ENCODE measurements at regions of chr20 and their contacts with region 1.

Region 1: GRCh38 chr20:3767427-3768341 is at the start of gene ADISSP:
- DNase-seq: peak; percentile 89 to 98 (median 95)
- ATAC-seq: peak; percentile 82
- H3K4me3 ChIP-seq: peak within 1 kb of the TSS; percentile 87
- H3K4me3 Mint-ChIP-seq: peak within 1 kb of the TSS; percentile 90
- H3K27ac ChIP-seq: peak within 1 kb of the TSS; percentile 96 to 99
- H3K27ac Mint-ChIP-seq: peak within 1 kb of the TSS; percentile 86
- H3K4me1 ChIP-seq: peaks cover 37% of the 10 kb centered on the region
- H3K4me1 Mint-ChIP-seq: peaks cover 26% of the 10 kb centered on the region
- H3K27me3 ChIP-seq: no peaks in the 10 kb centered on the region
- H3K27me3 Mint-ChIP-seq: no peaks in the 10 kb centered on the region
- CTCF ChIP-seq: no peak
- total RNA-seq, gene ADISSP: 11.2 to 11.6 TPM

Region 2: GRCh38 chr20:3146732-3147341 is 620.8 kb before region 1 on chr20:
- CTCF ChIA-PET with region 1: no interaction called
- POLR2A ChIA-PET with region 1: no interaction called
- intact Hi-C with region 1: no loop called
- DNase-seq: no peak
- ATAC-seq: no peak
- H3K4me3 ChIP-seq: no peak overlapping the region
- H3K4me3 Mint-ChIP-seq: no peak overlapping the region
- H3K27ac ChIP-seq: no peak overlapping the region
- H3K27ac Mint-ChIP-seq: peak overlapping the region; percentile 15
- H3K4me1 ChIP-seq: peaks cover 10% of the 10 kb centered on the region
- H3K4me1 Mint-ChIP-seq: peaks cover 56% of the 10 kb centered on the region
- H3K27me3 ChIP-seq: no peaks in the 10 kb centered on the region
- H3K27me3 Mint-ChIP-seq: no peaks in the 10 kb centered on the region
- CTCF ChIP-seq: no peak

Region 3: DNA sequence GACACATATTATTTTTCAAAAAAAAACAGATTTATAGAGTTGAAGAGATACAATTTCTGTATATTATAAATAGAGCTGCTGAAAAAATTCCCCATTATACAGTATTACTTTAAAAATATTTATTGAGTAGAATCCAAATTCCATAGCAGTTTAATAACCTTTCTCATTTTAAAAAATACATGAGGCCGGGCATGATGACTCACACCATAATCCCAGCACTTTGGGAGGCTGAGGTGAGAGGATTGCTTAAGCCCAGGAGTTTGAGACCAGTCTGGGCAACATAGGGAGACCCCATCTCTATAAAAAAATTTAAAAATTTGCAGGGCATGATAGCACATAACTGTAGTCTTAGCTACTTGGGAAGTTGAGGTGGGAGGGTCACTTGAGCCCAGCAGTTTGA is 283.9 kb before region 1 on chr20:
- CTCF ChIA-PET with region 1: no interaction called
- POLR2A ChIA-PET with region 1: no interaction called
- intact Hi-C with region 1: no loop called
- DNase-seq: no peak
- ATAC-seq: no peak
- H3K4me3 ChIP-seq: no peak overlapping the region
- H3K4me3 Mint-ChIP-seq: no peak overlapping the region
- H3K27ac ChIP-seq: no peak overlapping the region
- H3K27ac Mint-ChIP-seq: no peak overlapping the region
- H3K4me1 ChIP-seq: no peaks in the 10 kb centered on the region
- H3K4me1 Mint-ChIP-seq: peaks cover 28% of the 10 kb centered on the region
- H3K27me3 ChIP-seq: no peaks in the 10 kb centered on the region
- H3K27me3 Mint-ChIP-seq: no peaks in the 10 kb centered on the region
- CTCF ChIP-seq: no peak

Region 4: GRCh38 chr20:3679749-3680700 is 87.7 kb before region 1 on chr20:
- CTCF ChIA-PET with region 1: interaction called, 8 read pairs
- POLR2A ChIA-PET with region 1: interaction called, 4 read pairs
- intact Hi-C with region 1: loop called (anchors 1 to 5 kb)
- DNase-seq: no peak
- ATAC-seq: no peak
- H3K4me3 ChIP-seq: no peak overlapping the region
- H3K4me3 Mint-ChIP-seq: no peak overlapping the region
- H3K27ac ChIP-seq: no peak overlapping the region
- H3K27ac Mint-ChIP-seq: no peak overlapping the region
- H3K4me1 ChIP-seq: peaks cover 10% of the 10 kb centered on the region
- H3K4me1 Mint-ChIP-seq: peaks cover 5% of the 10 kb centered on the region
- H3K27me3 ChIP-seq: peaks cover 36 to 45% of the 10 kb centered on the region in 2 experiments
- H3K27me3 Mint-ChIP-seq: peaks cover 65% of the 10 kb centered on the region
- CTCF ChIP-seq: no peak

Region 5: DNA sequence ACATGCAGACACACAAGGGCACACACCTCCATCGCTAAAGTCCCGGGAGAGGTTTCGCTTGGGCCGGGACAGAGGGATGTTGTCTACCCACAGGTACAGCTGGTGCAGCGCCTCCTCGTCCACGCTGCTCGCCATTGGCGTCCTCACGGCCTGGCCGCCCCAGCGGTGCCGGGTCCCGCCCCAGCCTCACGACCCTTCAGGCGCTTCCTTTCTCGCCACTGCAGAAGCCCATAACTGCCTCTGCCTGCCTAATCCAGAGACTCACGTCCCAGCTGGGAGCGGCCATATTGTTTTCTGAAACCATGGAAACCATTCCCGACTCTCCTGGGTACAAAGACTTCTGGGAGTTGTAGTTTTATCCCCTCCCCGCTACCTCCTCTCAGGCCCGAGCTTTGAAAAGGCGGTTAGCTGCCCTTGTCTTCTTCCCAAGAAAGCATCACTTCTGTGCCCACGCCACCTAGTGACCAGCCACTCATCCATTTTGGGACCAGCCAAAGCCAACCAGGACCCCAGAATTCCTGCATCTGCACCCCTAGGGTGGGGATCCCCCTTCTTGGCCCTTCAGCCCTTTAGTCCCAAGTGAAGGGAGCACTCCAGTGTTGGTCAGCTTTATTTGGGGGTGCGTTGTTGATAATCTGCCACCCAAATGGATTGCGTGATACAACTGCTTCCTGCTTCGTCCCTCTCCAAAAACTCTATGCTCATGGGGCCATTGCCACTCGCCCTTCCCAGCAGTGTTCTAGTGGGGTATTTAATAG is 13.6 kb after region 1 on chr20 and contains the start of gene SPEF1:
- CTCF ChIA-PET with region 1: interaction called, 17 read pairs
- POLR2A ChIA-PET with region 1: interaction called, 36 read pairs
- intact Hi-C with region 1: loop called in 1 of 2 experiments (anchors 2 kb)
- DNase-seq: peak in 5 of 14 experiments; percentile 29 to 84 (median 80)
- ATAC-seq: peak; percentile 40
- H3K4me3 ChIP-seq: peak within 1 kb of the TSS; percentile 47
- H3K4me3 Mint-ChIP-seq: peak within 1 kb of the TSS; percentile 40
- H3K27ac ChIP-seq: no peak within 1 kb of the TSS
- H3K27ac Mint-ChIP-seq: peak within 1 kb of the TSS; percentile 43
- H3K4me1 ChIP-seq: peaks cover 53% of the 10 kb centered on the region
- H3K4me1 Mint-ChIP-seq: peaks cover 48% of the 10 kb centered on the region
- H3K27me3 ChIP-seq: peaks cover 9 to 12% of the 10 kb centered on the region in 2 experiments
- H3K27me3 Mint-ChIP-seq: peaks cover 14% of the 10 kb centered on the region
- CTCF ChIP-seq: no peak
- total RNA-seq, gene SPEF1: not detected

Region 6: GRCh38 chr20:3795511-3796468 is 28.1 kb after region 1 on chr20 and contains the start of gene CDC25B:
- CTCF ChIA-PET with region 1: interaction called, 5 read pairs
- POLR2A ChIA-PET with region 1: interaction called, 21 read pairs
- intact Hi-C with region 1: no loop called
- DNase-seq: peak; percentile 82 to 95 (median 89)
- ATAC-seq: peak; percentile 81
- H3K4me3 ChIP-seq: peak within 1 kb of the TSS; percentile 96
- H3K4me3 Mint-ChIP-seq: peak within 1 kb of the TSS; percentile 100
- H3K27ac ChIP-seq: peak within 1 kb of the TSS; percentile 90 to 95
- H3K27ac Mint-ChIP-seq: peak within 1 kb of the TSS; percentile 95
- H3K4me1 ChIP-seq: peaks cover 50% of the 10 kb centered on the region
- H3K4me1 Mint-ChIP-seq: peaks cover 45% of the 10 kb centered on the region
- H3K27me3 ChIP-seq: no peaks in the 10 kb centered on the region
- H3K27me3 Mint-ChIP-seq: no peaks in the 10 kb centered on the region
- CTCF ChIP-seq: peak; percentile 58
- total RNA-seq, gene CDC25B: 144 TPM

Region 7: DNA sequence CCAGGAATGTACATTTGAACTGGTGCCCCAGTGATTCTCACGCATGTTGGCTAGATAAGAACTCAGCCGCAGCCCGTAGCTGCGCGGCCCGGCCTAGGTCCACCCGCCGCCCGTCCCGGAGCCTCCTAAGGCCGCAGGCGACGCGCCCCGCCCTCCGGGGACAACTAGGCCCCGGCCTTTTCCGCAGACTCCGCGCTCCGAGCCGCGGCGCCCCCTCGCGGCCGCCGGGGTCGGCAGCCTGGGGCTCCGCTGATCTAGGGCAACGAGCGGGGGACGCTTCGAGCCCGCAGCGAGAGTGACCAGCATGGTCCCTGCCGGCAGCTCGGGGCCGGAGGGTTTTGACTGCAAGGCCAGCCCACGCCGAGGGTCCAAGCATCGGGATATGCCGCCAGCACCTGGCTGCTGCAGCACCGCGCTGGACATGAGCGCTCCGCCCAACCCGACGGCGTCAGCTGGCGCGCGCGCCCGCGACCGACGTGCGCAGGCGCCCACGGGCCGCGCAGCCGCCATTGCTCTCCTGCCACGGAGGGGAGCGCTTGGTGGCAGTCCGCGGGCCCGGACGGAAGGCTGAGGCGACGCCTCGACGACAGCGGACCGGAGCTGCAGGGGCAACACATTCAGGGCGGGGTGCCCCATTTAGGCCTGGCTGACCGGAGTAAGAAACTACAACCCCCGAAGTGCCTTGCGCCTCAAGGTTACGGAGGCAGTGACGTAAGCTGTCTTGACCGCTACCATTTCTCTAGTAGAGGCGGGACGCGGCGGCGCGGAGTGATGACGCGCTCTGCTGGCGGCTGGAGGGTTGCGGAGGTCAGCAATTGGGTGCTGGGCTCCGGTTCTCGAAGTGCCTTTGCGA is 52.6 kb after region 1 on chr20 and contains the start of gene AP5S1:
- CTCF ChIA-PET with region 1: interaction called, 10 read pairs
- POLR2A ChIA-PET with region 1: interaction called, 51 read pairs
- intact Hi-C with region 1: no loop called
- DNase-seq: peak; percentile 71 to 95 (median 84)
- ATAC-seq: peak; percentile 84
- H3K4me3 ChIP-seq: peak within 1 kb of the TSS; percentile 92
- H3K4me3 Mint-ChIP-seq: peak within 1 kb of the TSS; percentile 94
- H3K27ac ChIP-seq: peak within 1 kb of the TSS; percentile 93 to 99
- H3K27ac Mint-ChIP-seq: peak within 1 kb of the TSS; percentile 99
- H3K4me1 ChIP-seq: peaks cover 54% of the 10 kb centered on the region
- H3K4me1 Mint-ChIP-seq: peaks cover 48% of the 10 kb centered on the region
- H3K27me3 ChIP-seq: no peaks in the 10 kb centered on the region
- H3K27me3 Mint-ChIP-seq: no peaks in the 10 kb centered on the region
- CTCF ChIP-seq: peak; percentile 89
- total RNA-seq, gene AP5S1: 6.0 TPM

Region 8: DNA sequence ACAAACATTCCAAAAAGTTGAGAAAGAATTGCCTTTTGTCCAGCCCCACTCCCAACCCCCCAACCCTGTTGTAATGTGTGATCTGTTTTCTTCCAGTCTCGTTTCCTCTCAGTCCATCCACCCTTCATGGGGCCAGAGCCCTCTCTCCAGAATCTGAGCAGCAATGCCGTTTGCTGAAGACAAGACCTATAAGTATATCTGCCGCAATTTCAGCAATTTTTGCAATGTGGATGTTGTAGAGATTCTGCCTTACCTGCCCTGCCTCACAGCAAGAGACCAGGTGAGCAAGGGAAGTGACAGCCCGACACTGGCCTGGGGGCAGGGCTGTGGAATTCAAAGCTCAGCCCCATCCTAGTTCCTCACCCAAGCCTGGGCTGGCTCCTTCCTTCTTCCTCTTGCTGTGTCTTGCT is 86.8 kb after region 1 on chr20:
- CTCF ChIA-PET with region 1: interaction called, 8 read pairs
- POLR2A ChIA-PET with region 1: no interaction called
- intact Hi-C with region 1: loop called (anchors 1 to 5 kb)
- DNase-seq: no peak
- ATAC-seq: no peak
- H3K4me3 ChIP-seq: no peak overlapping the region
- H3K4me3 Mint-ChIP-seq: no peak overlapping the region
- H3K27ac ChIP-seq: no peak overlapping the region
- H3K27ac Mint-ChIP-seq: no peak overlapping the region
- H3K4me1 ChIP-seq: peaks cover 9% of the 10 kb centered on the region
- H3K4me1 Mint-ChIP-seq: peaks cover 13% of the 10 kb centered on the region
- H3K27me3 ChIP-seq: no peaks in the 10 kb centered on the region
- H3K27me3 Mint-ChIP-seq: no peaks in the 10 kb centered on the region
- CTCF ChIP-seq: no peak

Region 9: DNA sequence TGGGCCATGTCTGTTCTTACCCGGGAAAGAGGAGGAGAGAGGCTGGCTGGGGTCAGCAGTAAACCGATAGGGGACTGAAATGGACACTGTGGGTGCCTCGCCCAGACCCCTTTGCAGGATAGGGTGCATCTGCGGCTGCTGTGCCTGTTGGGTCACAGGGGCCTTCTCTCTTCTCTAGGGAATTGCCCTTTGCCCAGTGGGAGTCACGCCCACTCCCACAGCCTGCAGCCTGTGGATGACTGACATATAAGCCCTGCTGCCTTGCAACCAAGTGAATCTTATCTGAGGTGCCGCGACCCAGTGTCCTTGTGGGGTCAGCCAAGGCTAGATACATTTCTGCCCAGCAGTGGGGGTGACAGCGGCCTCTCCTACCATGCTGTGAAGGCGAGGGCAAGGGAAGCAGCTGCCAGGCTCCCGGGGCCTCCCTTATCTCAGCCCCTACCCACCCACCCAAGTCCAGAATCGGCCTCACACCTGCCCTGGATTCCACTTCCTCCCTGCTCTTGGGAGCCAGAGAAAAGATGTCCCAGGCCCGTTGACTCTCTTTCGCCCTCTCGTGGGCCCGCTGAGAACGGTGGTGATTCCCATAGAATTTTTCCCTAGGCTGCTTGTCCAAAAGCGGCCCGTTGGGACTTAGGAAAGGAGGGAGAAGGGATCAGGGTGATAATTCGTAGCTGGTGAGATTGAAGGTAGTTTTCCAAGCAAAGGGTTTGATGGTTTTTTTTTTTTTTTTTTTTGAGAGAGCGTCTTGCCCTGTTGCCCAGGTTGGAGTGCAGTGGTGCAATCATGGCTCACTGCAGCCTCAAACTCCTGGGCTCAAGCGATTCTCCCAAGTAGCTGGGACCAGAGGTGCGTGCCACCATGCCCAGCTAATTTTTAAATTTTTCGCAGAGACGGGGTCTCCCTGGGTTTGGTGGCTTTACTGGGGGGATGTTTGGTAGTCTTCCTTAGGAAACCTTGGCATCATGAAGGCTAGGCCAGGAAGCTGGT is 324.1 kb after region 1 on chr20:
- CTCF ChIA-PET with region 1: no interaction called
- POLR2A ChIA-PET with region 1: no interaction called
- intact Hi-C with region 1: loop called in 1 of 2 experiments (anchors 5 kb)
- DNase-seq: peak in 10 of 14 experiments; percentile 22 to 65 (median 42)
- ATAC-seq: no peak
- H3K4me3 ChIP-seq: no peak overlapping the region
- H3K4me3 Mint-ChIP-seq: no peak overlapping the region
- H3K27ac ChIP-seq: no peak overlapping the region
- H3K27ac Mint-ChIP-seq: no peak overlapping the region
- H3K4me1 ChIP-seq: no peaks in the 10 kb centered on the region
- H3K4me1 Mint-ChIP-seq: no peaks in the 10 kb centered on the region
- H3K27me3 ChIP-seq: no peaks in the 10 kb centered on the region
- H3K27me3 Mint-ChIP-seq: peaks cover 16% of the 10 kb centered on the region
- CTCF ChIP-seq: peak; percentile 59